Common myeloid progenitor, CD34-positive (primary cell): ENCODE measurements at regions of chr1 and their contacts with region 1.

Region 1: GRCh38 chr1:109277434-109278204 is 5.3 kb downstream of the PSRC1 start:
- DNase-seq: peak; percentile 62 to 70 (median 63)
- H3K4me3 ChIP-seq: no peak overlapping the region
- H3K27ac ChIP-seq: no peak overlapping the region
- H3K4me1 ChIP-seq: peaks cover 6 to 61% (median 22%) of the 10 kb centered on the region in 4 experiments
- H3K27me3 ChIP-seq: peaks cover 0 to 5% (median 0%) of the 10 kb centered on the region in 5 experiments

Region 2: DNA sequence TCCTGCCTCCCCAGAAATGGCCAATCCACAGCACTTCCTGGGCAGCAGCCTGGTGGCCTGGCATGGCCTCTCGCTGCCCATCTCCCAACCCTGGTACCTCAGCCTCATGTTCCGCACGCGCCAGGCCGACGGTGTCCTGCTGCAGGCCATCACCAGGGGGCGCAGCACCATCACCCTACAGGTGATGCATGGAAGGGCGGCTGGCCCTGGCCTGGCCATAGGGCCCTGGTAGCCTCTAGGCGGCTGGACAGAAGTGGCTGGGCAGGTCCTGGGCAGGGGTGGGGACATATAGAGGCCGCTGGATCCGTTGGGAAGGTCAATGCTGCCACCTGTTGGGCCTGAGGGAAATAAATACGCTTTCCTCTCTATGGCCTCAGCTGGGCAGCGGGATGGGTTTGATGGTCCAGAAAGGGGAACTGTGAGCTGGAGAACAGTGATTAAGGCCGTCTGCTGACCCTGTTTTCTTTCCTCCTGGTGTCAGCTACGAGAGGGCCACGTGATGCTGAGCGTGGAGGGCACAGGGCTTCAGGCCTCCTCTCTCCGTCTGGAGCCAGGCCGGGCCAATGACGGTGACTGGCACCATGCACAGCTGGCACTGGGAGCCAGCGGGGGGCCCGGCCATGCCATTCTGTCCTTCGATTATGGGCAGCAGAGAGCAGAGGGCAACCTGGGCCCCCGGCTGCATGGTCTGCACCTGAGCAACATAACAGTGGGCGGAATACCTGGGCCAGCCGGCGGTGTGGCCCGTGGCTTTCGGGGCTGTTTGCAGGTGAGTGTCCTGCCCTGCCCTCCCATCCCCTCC is 13.8 kb before region 1 on chr1:
- CTCF ChIA-PET with region 1: interaction called, 35 read pairs
- POLR2A ChIA-PET with region 1: no interaction called
- DNase-seq: peak; percentile 68 to 83 (median 79)
- H3K4me3 ChIP-seq: no peak overlapping the region
- H3K27ac ChIP-seq: no peak overlapping the region
- H3K4me1 ChIP-seq: no peaks in the 10 kb centered on the region
- H3K27me3 ChIP-seq: peaks cover 0 to 25% (median 2%) of the 10 kb centered on the region in 5 experiments

Region 3: GRCh38 chr1:109391626-109392025 is 114.0 kb after region 1 on chr1:
- CTCF ChIA-PET with region 1: interaction called, 181 read pairs
- POLR2A ChIA-PET with region 1: no interaction called
- DNase-seq: no peak
- H3K4me3 ChIP-seq: peak overlapping the region in 3 of 7 experiments; percentile 12 to 38 (median 16)
- H3K27ac ChIP-seq: peak overlapping the region in 1 of 2 experiments; percentile 76
- H3K4me1 ChIP-seq: peaks cover 19 to 78% (median 27%) of the 10 kb centered on the region in 4 experiments
- H3K27me3 ChIP-seq: peaks cover 0 to 9% (median 5%) of the 10 kb centered on the region in 5 experiments